Heart left ventricle (tissue), 16 donors: ENCODE measurements at regions of chr3 and their contacts with region 1.

Region 1: GRCh38 chr3:46368569-46368968 is 2.2 kb upstream of the CCR5 start:
- DNase-seq: peak; percentile 41 to 83 (median 55)
- ATAC-seq: peak; percentile 53 to 87 (median 72)
- H3K4me3 ChIP-seq: no peak overlapping the region
- H3K27ac ChIP-seq: peak overlapping the region in 1 of 12 donors; percentile 78
- H3K4me1 ChIP-seq: peaks cover 0 to 44% (median 0%) of the 10 kb centered on the region in 12 donors
- H3K27me3 ChIP-seq: peaks cover 0 to 41% (median 0%) of the 10 kb centered on the region in 9 donors
- CTCF ChIP-seq: peak in 6 of 12 donors; percentile 8 to 45 (median 24)
- POLR2A ChIP-seq: no peak

Region 2: DNA sequence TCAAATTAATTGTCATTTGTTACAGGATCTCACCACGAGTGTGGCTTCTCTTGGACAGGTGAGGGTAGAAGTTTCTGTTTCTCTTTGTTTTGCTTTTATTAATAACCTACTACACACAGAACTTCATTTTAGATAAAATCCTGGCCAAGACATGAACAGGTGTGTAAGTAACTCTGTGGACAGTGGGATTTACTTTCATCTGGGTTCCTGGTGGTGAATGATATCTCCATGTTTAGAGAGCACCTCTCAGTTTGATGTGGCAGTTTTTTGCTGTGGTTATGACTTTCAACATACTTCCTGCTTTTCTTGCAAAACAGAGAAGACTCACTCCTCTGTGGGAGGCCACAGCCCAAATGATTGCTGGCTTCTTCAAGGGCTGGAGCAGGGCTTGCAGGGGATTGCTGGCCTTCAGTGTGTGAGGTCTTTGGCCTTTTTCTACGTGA is 270.2 kb before region 1 on chr3:
- intact Hi-C with region 1: loop called in 1 of 10 experiments (anchors 5 kb)
- DNase-seq: peak in 3 of 5 donors; percentile 31 to 58 (median 43)
- ATAC-seq: peak; percentile 24 to 79 (median 66)
- H3K4me3 ChIP-seq: no peak overlapping the region
- H3K27ac ChIP-seq: peak overlapping the region; percentile 13 to 96 (median 49)
- H3K4me1 ChIP-seq: peaks cover 0 to 87% (median 0%) of the 10 kb centered on the region in 12 donors
- H3K27me3 ChIP-seq: no peaks in the 10 kb centered on the region
- CTCF ChIP-seq: no peak
- POLR2A ChIP-seq: no peak

Region 3: GRCh38 chr3:46214751-46215352 is 153.7 kb before region 1 on chr3:
- intact Hi-C with region 1: loop called in 1 of 10 experiments (anchors 10 kb)
- DNase-seq: no peak
- ATAC-seq: no peak
- H3K4me3 ChIP-seq: no peak overlapping the region
- H3K27ac ChIP-seq: no peak overlapping the region
- H3K4me1 ChIP-seq: peaks cover 0 to 35% (median 0%) of the 10 kb centered on the region in 12 donors
- H3K27me3 ChIP-seq: peaks cover 0 to 22% (median 3%) of the 10 kb centered on the region in 9 donors
- CTCF ChIP-seq: peak in 3 of 12 donors; percentile 7 to 20 (median 13)
- POLR2A ChIP-seq: no peak